ENCODE measurements at regions of chr3 and their contacts with region 1.

Region 1: GRCh38 chr3:153052096-153052460 is 109.9 kb upstream of the RAP2B start:
- DNase-seq: peak; percentile 90
- H3K4me3 Mint-ChIP-seq: peak overlapping the region; percentile 5
- H3K27ac Mint-ChIP-seq: peak overlapping the region; percentile 64
- H3K4me1 Mint-ChIP-seq: peaks cover 14% of the 10 kb centered on the region
- H3K27me3 Mint-ChIP-seq: no peaks in the 10 kb centered on the region
- CTCF ChIP-seq: no peak

Region 2: GRCh38 chr3:152491922-152492321 is 560.2 kb before region 1 on chr3:
- CTCF ChIA-PET with region 1: no interaction called
- POLR2A ChIA-PET with region 1: no interaction called
- intact Hi-C with region 1: no loop called
- DNase-seq: no peak
- H3K4me3 Mint-ChIP-seq: no peak overlapping the region
- H3K27ac Mint-ChIP-seq: no peak overlapping the region
- H3K4me1 Mint-ChIP-seq: no peaks in the 10 kb centered on the region
- H3K27me3 Mint-ChIP-seq: no peaks in the 10 kb centered on the region
- CTCF ChIP-seq: no peak

Region 3: DNA sequence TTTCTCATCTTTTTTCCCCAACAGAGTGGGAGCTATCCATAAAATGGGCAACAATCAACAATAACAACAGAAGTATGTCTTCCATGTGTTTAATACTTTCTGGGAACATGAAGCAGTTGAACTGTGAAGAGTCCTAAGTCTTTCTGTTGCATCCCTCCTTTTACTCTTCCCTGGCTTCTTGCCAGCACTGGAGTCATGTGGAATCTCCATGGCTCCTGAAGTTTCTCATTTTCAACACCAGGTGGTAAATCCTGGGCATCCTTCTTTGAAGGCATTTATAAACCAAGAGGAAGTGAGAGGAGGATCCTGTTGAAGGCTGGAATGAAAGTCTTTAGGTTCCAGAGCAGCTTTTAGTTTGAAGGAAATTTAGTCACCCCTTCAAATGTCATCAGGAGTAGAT is 257.3 kb before region 1 on chr3:
- CTCF ChIA-PET with region 1: no interaction called
- POLR2A ChIA-PET with region 1: no interaction called
- intact Hi-C with region 1: no loop called
- DNase-seq: peak; percentile 8
- H3K4me3 Mint-ChIP-seq: no peak overlapping the region
- H3K27ac Mint-ChIP-seq: no peak overlapping the region
- H3K4me1 Mint-ChIP-seq: no peaks in the 10 kb centered on the region
- H3K27me3 Mint-ChIP-seq: no peaks in the 10 kb centered on the region
- CTCF ChIP-seq: no peak

Region 4: DNA sequence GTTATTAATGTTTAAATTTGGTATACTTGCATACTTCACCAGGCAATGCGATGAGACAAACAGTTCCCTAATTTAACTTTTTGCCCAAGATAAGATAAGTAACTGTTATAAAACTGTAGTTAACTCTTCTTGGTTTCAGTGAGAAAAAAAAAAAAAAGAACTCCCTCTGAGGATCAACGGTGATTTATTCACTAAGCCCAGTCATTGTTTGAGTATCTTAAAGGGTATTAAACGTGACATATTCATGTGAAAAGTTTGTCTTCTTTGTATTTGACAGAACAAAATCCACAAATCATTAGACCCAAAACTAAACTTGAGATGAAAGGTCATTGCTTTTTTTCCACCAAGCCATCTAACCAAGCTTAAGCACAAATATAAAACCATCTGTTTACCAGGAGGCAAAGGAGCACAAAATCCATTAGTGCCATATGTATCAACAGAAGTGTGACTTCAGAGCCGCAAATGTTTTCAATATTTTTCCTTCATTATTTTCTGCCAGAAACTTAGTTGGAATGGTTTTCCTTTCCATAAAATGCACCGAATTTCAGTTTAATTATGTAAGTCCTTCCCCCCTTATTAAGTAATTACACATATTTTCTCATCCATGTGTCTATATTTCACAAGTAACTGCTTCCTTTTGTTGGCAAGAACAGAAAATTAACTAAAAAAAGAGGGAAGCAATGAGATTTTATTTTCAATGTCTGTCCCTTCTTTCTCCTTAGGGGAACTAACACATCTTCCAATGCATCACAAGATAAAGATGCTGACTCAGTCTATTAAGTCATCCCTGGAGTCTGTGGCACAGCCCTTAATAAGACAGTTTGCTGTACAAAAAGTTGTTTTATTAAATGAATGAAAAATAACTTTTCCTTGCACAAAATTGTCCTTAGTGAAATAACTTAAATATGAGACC is 17.8 kb after region 1 on chr3:
- CTCF ChIA-PET with region 1: no interaction called
- POLR2A ChIA-PET with region 1: no interaction called
- intact Hi-C with region 1: no loop called
- DNase-seq: peak; percentile 9
- H3K4me3 Mint-ChIP-seq: no peak overlapping the region
- H3K27ac Mint-ChIP-seq: no peak overlapping the region
- H3K4me1 Mint-ChIP-seq: no peaks in the 10 kb centered on the region
- H3K27me3 Mint-ChIP-seq: no peaks in the 10 kb centered on the region
- CTCF ChIP-seq: no peak

Region 5: GRCh38 chr3:153138276-153139210 is 86.5 kb after region 1 on chr3:
- CTCF ChIA-PET with region 1: interaction called, 3 read pairs
- POLR2A ChIA-PET with region 1: interaction called, 38 read pairs
- intact Hi-C with region 1: no loop called
- DNase-seq: peak; percentile 99
- H3K4me3 Mint-ChIP-seq: peak overlapping the region; percentile 19
- H3K27ac Mint-ChIP-seq: peak overlapping the region; percentile 90
- H3K4me1 Mint-ChIP-seq: peaks cover 31% of the 10 kb centered on the region
- H3K27me3 Mint-ChIP-seq: no peaks in the 10 kb centered on the region
- CTCF ChIP-seq: no peak

Region 6: DNA sequence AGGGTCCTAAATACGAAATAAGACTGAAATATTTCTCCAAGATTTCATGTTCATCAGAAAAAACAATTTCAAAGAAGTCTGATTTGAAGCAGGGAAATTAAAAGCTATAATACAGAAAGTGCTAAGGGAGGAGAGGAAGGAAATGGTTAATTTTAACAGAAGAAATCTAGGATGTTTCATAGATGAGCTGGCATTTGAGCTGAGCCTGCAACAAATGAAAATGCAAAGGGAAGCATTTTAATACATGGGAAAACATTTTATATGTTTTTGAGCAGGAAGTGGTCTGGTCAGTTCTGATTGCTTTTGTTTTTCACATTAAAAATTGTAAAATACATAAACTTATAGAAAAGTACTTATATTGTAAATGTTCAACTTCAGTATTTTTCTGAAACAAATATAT is 92.7 kb after region 1 on chr3:
- CTCF ChIA-PET with region 1: no interaction called
- POLR2A ChIA-PET with region 1: interaction called, 38 read pairs
- intact Hi-C with region 1: no loop called
- DNase-seq: peak; percentile 34
- H3K4me3 Mint-ChIP-seq: no peak overlapping the region
- H3K27ac Mint-ChIP-seq: peak overlapping the region; percentile 90
- H3K4me1 Mint-ChIP-seq: peaks cover 30% of the 10 kb centered on the region
- H3K27me3 Mint-ChIP-seq: no peaks in the 10 kb centered on the region
- CTCF ChIP-seq: no peak

Measured in MCF 10A (cell line).